ENCODE measurements at regions of chr7 and their contacts with region 1.

Region 1: GRCh38 chr7:22488643-22489462 is 11.1 kb downstream of the STEAP1B start:
- DNase-seq: peak; percentile 49 to 75
- H3K4me3 ChIP-seq: no peak overlapping the region
- H3K27ac ChIP-seq: no peak overlapping the region
- H3K4me1 ChIP-seq: peaks cover 12% of the 10 kb centered on the region; the same call in 1 of the 2 replicates
- H3K27me3 ChIP-seq: no peaks in the 10 kb centered on the region
- CTCF ChIP-seq: peak; percentile 100

Region 2: DNA sequence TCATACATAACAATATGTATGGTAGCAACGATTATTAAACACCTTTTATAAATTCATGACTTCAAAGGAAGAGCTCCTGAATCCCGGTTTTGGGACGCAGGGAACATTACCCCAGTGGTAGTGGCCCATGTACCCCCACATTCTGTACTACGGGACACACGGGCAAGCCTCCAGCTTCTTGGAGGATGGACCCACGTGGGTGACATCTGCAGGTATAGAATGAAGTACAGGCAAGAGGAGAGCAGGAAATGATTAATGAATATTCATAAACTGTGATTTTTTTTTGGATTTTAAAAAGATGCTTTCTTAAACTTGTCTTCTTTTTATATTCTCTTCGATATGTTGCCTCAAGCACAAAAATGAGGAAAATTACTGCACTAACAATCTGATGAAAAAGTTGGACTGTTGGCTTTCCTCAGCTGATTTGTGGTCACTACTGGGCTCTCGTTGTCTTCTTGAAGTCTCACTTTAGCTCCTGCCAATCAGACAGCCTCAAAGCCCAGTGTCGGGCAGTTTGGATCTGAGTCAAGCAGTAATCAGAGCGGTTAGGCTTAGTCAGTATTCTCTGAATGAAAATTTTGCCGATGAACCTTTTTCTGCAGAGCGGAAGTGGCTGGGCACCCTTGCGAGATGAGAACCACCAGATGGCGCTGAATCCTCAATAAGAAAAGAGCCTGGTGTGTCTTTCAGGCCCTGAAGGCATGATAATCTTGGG is 385.4 kb before region 1 on chr7:
- CTCF ChIA-PET with region 1: no interaction called
- POLR2A ChIA-PET with region 1: no interaction called
- intact Hi-C with region 1: loop called (anchors 1 kb)
- DNase-seq: peak; percentile 57 to 68
- H3K4me3 ChIP-seq: no peak overlapping the region
- H3K27ac ChIP-seq: no peak overlapping the region
- H3K4me1 ChIP-seq: no peaks in the 10 kb centered on the region
- H3K27me3 ChIP-seq: peaks cover 43% of the 10 kb centered on the region
- CTCF ChIP-seq: peak; percentile 88

Region 3: DNA sequence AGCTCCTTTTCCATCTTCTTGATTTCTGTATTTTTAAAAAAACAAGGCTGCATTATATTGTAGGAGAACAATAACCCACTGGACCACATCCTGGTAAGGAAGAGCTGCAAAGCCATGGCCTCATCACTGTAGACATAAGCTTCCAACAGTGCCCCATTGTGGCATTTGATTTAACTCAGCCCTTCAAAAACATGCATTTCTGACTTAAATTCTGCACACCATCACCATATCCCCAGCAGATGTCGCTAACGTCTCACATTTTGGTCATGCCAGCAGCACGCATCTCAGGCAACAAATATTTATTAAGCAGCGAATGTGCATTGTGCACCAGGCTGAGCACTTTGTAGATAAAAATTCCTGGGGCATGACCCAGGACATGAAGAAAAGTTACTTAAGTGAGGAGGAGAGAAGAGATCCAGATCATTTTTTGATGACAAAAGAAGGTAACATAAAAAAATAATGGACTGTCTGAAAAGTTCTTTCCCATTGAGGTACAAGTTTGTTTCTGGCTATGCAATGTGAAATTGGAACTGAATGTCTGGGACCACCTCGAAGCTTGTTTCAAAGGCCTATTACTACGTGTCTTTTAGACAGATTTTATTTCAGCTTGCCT is 378.5 kb before region 1 on chr7:
- CTCF ChIA-PET with region 1: interaction called, 4 read pairs
- POLR2A ChIA-PET with region 1: no interaction called
- intact Hi-C with region 1: loop called (anchors 1 kb)
- DNase-seq: peak; percentile 65 to 74
- H3K4me3 ChIP-seq: no peak overlapping the region
- H3K27ac ChIP-seq: no peak overlapping the region
- H3K4me1 ChIP-seq: no peaks in the 10 kb centered on the region
- H3K27me3 ChIP-seq: no peaks in the 10 kb centered on the region
- CTCF ChIP-seq: peak; percentile 98

Region 4: DNA sequence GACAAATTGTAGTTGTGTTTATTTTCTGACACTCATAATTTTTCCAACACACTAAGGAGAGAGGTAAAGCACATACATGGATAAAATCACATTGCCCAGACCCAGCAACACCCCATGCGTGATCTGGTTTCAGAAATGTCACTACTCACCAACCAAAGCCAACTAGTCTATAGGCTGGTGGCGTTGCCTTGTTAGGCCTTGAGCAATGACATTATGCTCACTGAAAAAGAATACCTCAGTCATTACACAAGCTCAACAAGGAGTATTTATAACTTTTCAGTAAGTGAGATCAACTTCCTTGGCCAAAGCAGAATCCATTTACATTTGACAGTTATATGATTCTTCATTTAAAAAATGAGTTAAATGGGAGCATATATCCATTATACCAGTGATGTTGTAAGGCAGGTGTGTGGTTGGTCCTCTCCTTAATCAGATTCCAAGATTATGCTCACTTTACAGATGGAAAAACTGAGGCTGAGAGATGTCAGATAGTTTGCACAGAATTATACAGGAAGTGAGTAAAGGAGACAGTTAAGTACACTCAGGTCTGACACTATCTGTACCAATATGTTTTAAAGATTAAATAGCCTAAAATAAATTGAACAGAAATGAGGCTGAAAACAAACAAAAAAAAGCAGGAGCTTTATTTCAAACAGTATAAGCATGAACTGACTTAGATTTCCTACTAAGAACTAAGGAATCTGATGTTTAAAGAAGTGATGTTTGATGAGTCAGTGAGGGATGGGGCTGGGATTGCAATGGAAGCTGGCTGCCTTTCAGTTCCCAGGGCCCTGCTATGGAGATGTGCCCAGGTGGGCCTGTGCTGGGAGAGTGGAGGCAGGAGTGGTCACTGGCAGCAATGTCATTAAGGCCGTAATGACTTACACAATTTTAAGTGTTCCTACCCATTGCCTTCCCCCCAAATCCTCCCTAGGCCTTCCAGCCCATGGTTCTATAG is 250.2 kb before region 1 on chr7:
- CTCF ChIA-PET with region 1: no interaction called
- POLR2A ChIA-PET with region 1: no interaction called
- intact Hi-C with region 1: loop called (anchors 10 kb)
- DNase-seq: no peak
- H3K4me3 ChIP-seq: no peak overlapping the region
- H3K27ac ChIP-seq: no peak overlapping the region
- H3K4me1 ChIP-seq: no peaks in the 10 kb centered on the region
- H3K27me3 ChIP-seq: no peaks in the 10 kb centered on the region
- CTCF ChIP-seq: no peak

Region 5: GRCh38 chr7:22295402-22296264 is 193.2 kb before region 1 on chr7:
- CTCF ChIA-PET with region 1: no interaction called
- POLR2A ChIA-PET with region 1: no interaction called
- intact Hi-C with region 1: loop called (anchors 5 kb)
- DNase-seq: no peak
- H3K4me3 ChIP-seq: no peak overlapping the region
- H3K27ac ChIP-seq: no peak overlapping the region
- H3K4me1 ChIP-seq: no peaks in the 10 kb centered on the region
- H3K27me3 ChIP-seq: no peaks in the 10 kb centered on the region
- CTCF ChIP-seq: no peak

Region 6: DNA sequence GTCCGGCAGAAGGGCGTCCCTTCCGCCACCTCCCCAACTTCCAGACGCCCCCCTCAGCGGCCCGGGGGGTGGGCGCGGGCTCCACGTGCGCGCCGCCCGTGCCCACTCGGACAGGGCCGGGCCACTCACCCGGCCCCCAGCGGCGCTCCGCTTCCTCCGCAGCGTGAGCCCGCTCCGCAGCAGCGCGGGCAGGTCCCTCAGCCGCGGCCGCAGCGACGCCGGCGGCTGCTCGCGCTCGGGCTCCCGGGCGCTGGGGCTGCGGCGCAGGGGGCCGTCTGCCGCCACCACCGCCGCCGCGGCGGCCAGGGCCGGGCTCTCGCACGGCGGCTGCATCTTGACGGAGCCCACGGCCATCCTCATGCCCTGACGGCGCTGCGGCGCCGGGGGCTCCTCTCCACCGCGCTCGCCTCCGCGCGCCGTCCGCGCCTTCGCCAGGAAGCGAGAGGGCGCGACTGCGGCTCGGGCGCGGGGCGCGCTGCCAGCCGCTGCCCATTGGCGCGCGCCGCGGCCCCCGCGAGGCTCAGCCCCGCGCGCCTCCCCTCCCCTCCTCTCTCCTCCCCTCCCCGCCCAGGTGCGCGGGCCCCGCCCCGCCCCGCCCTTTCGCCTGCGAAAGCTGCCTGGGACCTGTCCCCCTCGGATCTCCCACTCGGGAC is 132.0 kb before region 1 on chr7 and contains the start of gene RAPGEF5:
- CTCF ChIA-PET with region 1: no interaction called
- POLR2A ChIA-PET with region 1: interaction called, 3 read pairs
- intact Hi-C with region 1: loop called (anchors 1 kb)
- DNase-seq: peak in 1 of 2 experiments; percentile 67
- H3K4me3 ChIP-seq: peak within 1 kb of the TSS; percentile 83
- H3K27ac ChIP-seq: no peak within 1 kb of the TSS
- H3K4me1 ChIP-seq: peaks cover 38% of the 10 kb centered on the region
- H3K27me3 ChIP-seq: no peaks in the 10 kb centered on the region
- CTCF ChIP-seq: no peak
- total RNA-seq, gene RAPGEF5: 16.4 and 16.6 TPM in 2 replicates

Measured in PC-9 (cell line).